ENCODE measurements at regions of chr3 and their contacts with region 1.

Region 1: GRCh38 chr3:70358978-70359580 is 46.6 kb upstream of the MDFIC2 start:
- DNase-seq: peak; percentile 14
- H3K4me3 ChIP-seq: no peak overlapping the region
- H3K27ac ChIP-seq: no peak overlapping the region
- H3K4me1 ChIP-seq: no peaks in the 10 kb centered on the region
- H3K27me3 ChIP-seq: no peaks in the 10 kb centered on the region
- CTCF ChIP-seq: peak; percentile 79
- EP300 ChIP-seq: no peak
- RAD21 ChIP-seq: peak; percentile 83

Region 2: DNA sequence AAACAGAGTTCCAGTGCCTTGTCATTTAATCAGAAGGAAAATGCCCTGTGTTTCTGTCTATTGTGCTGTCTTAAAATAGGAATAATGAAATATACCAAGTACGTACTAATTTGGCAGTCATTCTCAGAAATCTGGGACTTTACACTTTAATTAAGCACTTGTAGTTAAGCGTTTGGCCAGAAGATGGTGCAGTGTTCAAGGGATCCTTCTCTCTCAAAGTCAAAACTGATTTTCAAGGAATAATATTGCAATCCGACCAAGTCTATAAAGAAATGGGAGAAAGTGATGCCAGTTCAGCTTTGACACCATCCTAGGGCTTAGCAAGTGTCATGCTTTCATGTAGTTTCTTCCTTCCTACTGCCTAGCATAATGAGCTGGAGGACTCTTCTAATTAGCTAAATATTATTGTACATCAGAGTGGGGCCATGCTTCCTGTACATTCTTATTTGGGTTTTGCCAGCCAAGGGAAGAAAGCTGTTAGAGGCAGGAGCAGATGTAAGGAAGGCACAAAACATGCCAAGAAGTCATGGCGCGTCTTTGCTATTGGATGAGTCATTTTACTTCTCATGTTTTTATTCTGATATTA is 294.8 kb before region 1 on chr3:
- CTCF ChIA-PET with region 1: interaction called, 41 read pairs
- POLR2A ChIA-PET with region 1: no interaction called
- DNase-seq: peak; percentile 8
- H3K4me3 ChIP-seq: peak overlapping the region in 1 of 2 experiments; percentile 5; a peak in 1 of 4 replicates
- H3K27ac ChIP-seq: no peak overlapping the region
- H3K4me1 ChIP-seq: no peaks in the 10 kb centered on the region
- H3K27me3 ChIP-seq: no peaks in the 10 kb centered on the region
- CTCF ChIP-seq: peak; percentile 75
- EP300 ChIP-seq: no peak
- RAD21 ChIP-seq: peak; percentile 83

Region 3: GRCh38 chr3:70069557-70069956 is 289.5 kb before region 1 on chr3:
- CTCF ChIA-PET with region 1: interaction called, 41 read pairs
- POLR2A ChIA-PET with region 1: no interaction called
- DNase-seq: no peak
- H3K4me3 ChIP-seq: no peak overlapping the region
- H3K27ac ChIP-seq: no peak overlapping the region
- H3K4me1 ChIP-seq: no peaks in the 10 kb centered on the region
- H3K27me3 ChIP-seq: no peaks in the 10 kb centered on the region
- CTCF ChIP-seq: no peak
- EP300 ChIP-seq: no peak
- RAD21 ChIP-seq: no peak

Region 4: GRCh38 chr3:70120357-70121121 is 238.5 kb before region 1 on chr3:
- CTCF ChIA-PET with region 1: interaction called, 18 read pairs
- POLR2A ChIA-PET with region 1: no interaction called
- DNase-seq: peak; percentile 29
- H3K4me3 ChIP-seq: no peak overlapping the region
- H3K27ac ChIP-seq: no peak overlapping the region
- H3K4me1 ChIP-seq: no peaks in the 10 kb centered on the region
- H3K27me3 ChIP-seq: no peaks in the 10 kb centered on the region
- CTCF ChIP-seq: peak; percentile 75
- EP300 ChIP-seq: no peak
- RAD21 ChIP-seq: peak; percentile 67

Region 5: GRCh38 chr3:70342149-70342548 is 16.9 kb before region 1 on chr3:
- CTCF ChIA-PET with region 1: interaction called, 19 read pairs
- POLR2A ChIA-PET with region 1: no interaction called
- DNase-seq: no peak
- H3K4me3 ChIP-seq: no peak overlapping the region
- H3K27ac ChIP-seq: no peak overlapping the region
- H3K4me1 ChIP-seq: no peaks in the 10 kb centered on the region
- H3K27me3 ChIP-seq: no peaks in the 10 kb centered on the region
- CTCF ChIP-seq: no peak
- EP300 ChIP-seq: no peak
- RAD21 ChIP-seq: no peak